ENCODE measurements at regions of chr6 and their contacts with region 1.

Region 1: GRCh38 chr6:37691904-37692806 is 5.5 kb downstream of the MDGA1 start:
- DNase-seq: peak; percentile 85
- ATAC-seq: peak; percentile 86
- H3K4me3 ChIP-seq: no peak overlapping the region
- H3K27ac ChIP-seq: peak overlapping the region; percentile 10; the same call in 1 of the 2 replicates
- H3K4me1 ChIP-seq: peaks cover 14% of the 10 kb centered on the region
- H3K27me3 ChIP-seq: peaks cover 17% of the 10 kb centered on the region
- CTCF ChIP-seq: peak; percentile 97

Region 2: GRCh38 chr6:37381579-37381978 is 310.6 kb before region 1 on chr6:
- CTCF ChIA-PET with region 1: no interaction called
- POLR2A ChIA-PET with region 1: no interaction called
- intact Hi-C with region 1: loop called (anchors 5 kb)
- DNase-seq: peak; percentile 88
- ATAC-seq: peak; percentile 93
- H3K4me3 ChIP-seq: no peak overlapping the region
- H3K27ac ChIP-seq: no peak overlapping the region
- H3K4me1 ChIP-seq: no peaks in the 10 kb centered on the region
- H3K27me3 ChIP-seq: no peaks in the 10 kb centered on the region
- CTCF ChIP-seq: peak; percentile 94

Region 3: GRCh38 chr6:37483917-37484785 is 208.0 kb before region 1 on chr6:
- CTCF ChIA-PET with region 1: no interaction called
- POLR2A ChIA-PET with region 1: no interaction called
- intact Hi-C with region 1: loop called (anchors 2 kb)
- DNase-seq: peak; percentile 56
- ATAC-seq: peak; percentile 73
- H3K4me3 ChIP-seq: no peak overlapping the region
- H3K27ac ChIP-seq: no peak overlapping the region
- H3K4me1 ChIP-seq: no peaks in the 10 kb centered on the region
- H3K27me3 ChIP-seq: no peaks in the 10 kb centered on the region
- CTCF ChIP-seq: peak; percentile 77

Region 4: GRCh38 chr6:37576336-37576813 is 115.8 kb before region 1 on chr6:
- CTCF ChIA-PET with region 1: no interaction called
- POLR2A ChIA-PET with region 1: no interaction called
- intact Hi-C with region 1: loop called (anchors 10 kb)
- DNase-seq: peak; percentile 81
- ATAC-seq: peak; percentile 91
- H3K4me3 ChIP-seq: no peak overlapping the region
- H3K27ac ChIP-seq: peak overlapping the region; percentile 20
- H3K4me1 ChIP-seq: peaks cover 19% of the 10 kb centered on the region
- H3K27me3 ChIP-seq: no peaks in the 10 kb centered on the region
- CTCF ChIP-seq: no peak

Region 5: GRCh38 chr6:37607944-37608343 is 84.2 kb before region 1 on chr6:
- CTCF ChIA-PET with region 1: interaction called, 4 read pairs
- POLR2A ChIA-PET with region 1: no interaction called
- intact Hi-C with region 1: loop called (anchors 2 kb)
- DNase-seq: peak; percentile 42
- ATAC-seq: no peak
- H3K4me3 ChIP-seq: no peak overlapping the region
- H3K27ac ChIP-seq: no peak overlapping the region
- H3K4me1 ChIP-seq: no peaks in the 10 kb centered on the region
- H3K27me3 ChIP-seq: peaks cover 23% of the 10 kb centered on the region
- CTCF ChIP-seq: peak; percentile 66